Right ventricle myocardium superior (tissue), 1 donor: ENCODE measurements at regions of chr12 and their contacts with region 1.

Region 1: DNA sequence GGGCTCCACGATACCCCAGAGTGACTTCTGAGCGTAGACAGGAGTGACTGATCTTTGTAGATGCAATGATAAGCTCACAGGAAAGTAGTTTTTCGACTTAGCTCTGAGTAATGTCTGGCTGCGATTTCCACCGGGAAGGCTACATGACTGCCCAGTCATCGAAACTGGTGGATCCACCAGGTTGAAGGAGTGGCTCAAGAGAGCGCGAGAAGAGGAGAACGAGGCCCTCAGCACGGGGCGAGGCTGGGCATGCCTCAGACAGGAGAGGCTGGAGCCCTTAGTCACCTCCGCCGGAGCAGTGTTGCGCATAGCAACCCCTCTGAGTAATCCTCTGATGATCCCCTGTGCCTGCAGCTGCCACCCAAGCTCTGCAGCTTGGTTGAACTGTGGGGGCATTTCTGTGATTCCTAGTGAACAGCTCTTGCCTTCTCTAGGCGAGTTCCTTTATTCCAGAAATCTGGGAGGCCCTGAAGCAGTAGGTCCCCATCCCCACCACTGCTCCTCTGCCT is 25.6 kb downstream of the ELK3 start:
- DNase-seq: no peak
- ATAC-seq: no peak

Region 2: DNA sequence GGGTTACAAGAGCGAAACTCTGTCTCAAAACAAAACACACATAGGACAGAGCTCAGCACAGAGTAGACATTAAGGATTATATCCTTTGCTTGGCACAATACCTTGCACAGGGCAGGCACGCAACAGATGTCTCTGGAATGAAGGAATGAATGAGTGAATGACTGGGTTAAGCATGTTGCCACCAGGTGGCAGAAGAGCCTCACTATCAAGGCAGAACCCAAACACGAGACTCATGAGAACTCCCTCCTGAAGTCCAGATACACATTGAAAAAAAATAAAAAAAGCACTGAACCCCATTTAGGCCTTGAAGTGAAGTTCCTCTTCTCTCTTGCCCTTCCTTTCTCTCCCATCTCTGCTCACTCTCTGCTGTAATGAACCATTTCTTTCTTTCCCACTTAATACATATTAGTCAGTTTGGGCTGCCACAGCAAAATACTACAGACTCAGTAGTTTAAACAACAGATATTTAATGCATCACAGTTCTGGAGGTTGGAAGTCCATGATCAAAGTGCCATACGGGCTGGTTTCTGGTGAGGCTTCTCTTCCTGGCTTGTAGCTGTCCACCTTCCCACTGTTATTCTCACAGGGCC is 157.8 kb before region 1 on chr12:
- intact Hi-C with region 1: loop called (anchors 5 kb)
- DNase-seq: peak; percentile 72
- ATAC-seq: peak; percentile 92

Region 3: GRCh38 chr12:96120359-96121100 is 99.2 kb before region 1 on chr12:
- intact Hi-C with region 1: no loop called
- DNase-seq: no peak
- ATAC-seq: peak; percentile 34

Region 4: GRCh38 chr12:96658124-96658725 is 438.5 kb after region 1 on chr12:
- intact Hi-C with region 1: no loop called
- DNase-seq: no peak
- ATAC-seq: no peak